Heart right ventricle (tissue), 16 donors: ENCODE measurements at regions of chr19 and their contacts with region 1.

Region 1: GRCh38 chr19:11894851-11895250 is 7.3 kb downstream of the ZNF69 start:
- DNase-seq: no peak
- ATAC-seq: no peak
- H3K4me3 ChIP-seq: no peak overlapping the region
- H3K27ac ChIP-seq: no peak overlapping the region
- H3K4me1 ChIP-seq: no peaks in the 10 kb centered on the region
- H3K27me3 ChIP-seq: no peaks in the 10 kb centered on the region
- CTCF ChIP-seq: no peak

Region 2: DNA sequence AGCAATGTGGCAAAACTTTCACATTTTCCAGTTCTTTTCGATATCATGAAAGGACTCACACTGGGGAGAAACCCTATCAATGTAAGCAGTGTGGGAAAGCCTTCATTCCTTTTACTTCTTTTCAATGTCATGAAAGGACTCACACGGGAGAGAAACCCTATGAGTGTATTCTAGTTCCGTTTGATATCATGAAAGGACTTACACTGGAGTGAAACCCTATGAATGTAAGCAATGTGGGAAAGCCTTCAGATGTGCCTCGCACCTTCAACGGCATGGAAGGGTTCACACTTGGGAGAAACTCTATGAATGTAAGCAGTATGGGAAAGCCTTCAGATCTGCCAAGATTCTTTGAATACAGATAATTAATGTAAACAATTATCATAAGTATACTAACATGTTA is 55.5 kb after region 1 on chr19:
- intact Hi-C with region 1: loop called in 1 of 10 experiments (anchors 10 kb)
- DNase-seq: no peak
- ATAC-seq: no peak
- H3K4me3 ChIP-seq: no peak overlapping the region
- H3K27ac ChIP-seq: no peak overlapping the region
- H3K4me1 ChIP-seq: no peaks in the 10 kb centered on the region
- H3K27me3 ChIP-seq: no peaks in the 10 kb centered on the region
- CTCF ChIP-seq: no peak